H1 (cell line): ENCODE measurements at regions of chr1 and their contacts with region 1.

Region 1: GRCh38 chr1:42936309-42937078 is 22.2 kb downstream of the SLC2A1 start:
- DNase-seq: no peak
- H3K4me3 ChIP-seq: no peak overlapping the region
- H3K27ac ChIP-seq: no peak overlapping the region
- H3K4me1 ChIP-seq: peaks cover 3 to 41% (median 21%) of the 10 kb centered on the region in 4 experiments
- H3K27me3 ChIP-seq: no peaks in the 10 kb centered on the region
- CTCF ChIP-seq: no peak
- EP300 ChIP-seq: no peak
- POLR2A ChIP-seq: peak in 1 of 2 experiments; percentile 54; a peak in 1 of 3 replicates
- RAD21 ChIP-seq: no peak

Region 2: GRCh38 chr1:42891465-42892150 is 44.9 kb before region 1 on chr1:
- CTCF ChIA-PET with region 1: no interaction called
- POLR2A ChIA-PET with region 1: no interaction called
- DNase-seq: no peak
- H3K4me3 ChIP-seq: no peak overlapping the region
- H3K27ac ChIP-seq: no peak overlapping the region
- H3K4me1 ChIP-seq: no peaks in the 10 kb centered on the region; a peak in 1 of 7 replicates
- H3K27me3 ChIP-seq: no peaks in the 10 kb centered on the region
- CTCF ChIP-seq: no peak
- EP300 ChIP-seq: no peak
- POLR2A ChIP-seq: no peak
- RAD21 ChIP-seq: no peak

Region 3: GRCh38 chr1:42924082-42924850 is 12.2 kb before region 1 on chr1:
- CTCF ChIA-PET with region 1: interaction called, 11 read pairs
- POLR2A ChIA-PET with region 1: interaction called, 40 read pairs
- DNase-seq: peak; percentile 84 to 98
- H3K4me3 ChIP-seq: peak overlapping the region; percentile 54 to 74 (median 60)
- H3K27ac ChIP-seq: peak overlapping the region; percentile 81; the same call in 1 of the 2 replicates
- H3K4me1 ChIP-seq: peaks cover 4 to 10% (median 7%) of the 10 kb centered on the region in 4 experiments; a peak in 6 of 7 replicates
- H3K27me3 ChIP-seq: no peaks in the 10 kb centered on the region
- CTCF ChIP-seq: peak in 2 of 3 experiments; percentile 2 to 33; a peak in 2 of 4 replicates
- EP300 ChIP-seq: no peak
- POLR2A ChIP-seq: peak; percentile 73 to 93
- RAD21 ChIP-seq: peak in 1 of 2 experiments; percentile 7; a peak in 1 of 4 replicates

Region 4: GRCh38 chr1:42952303-42953001 is 16.0 kb after region 1 on chr1:
- CTCF ChIA-PET with region 1: interaction called, 7 read pairs
- POLR2A ChIA-PET with region 1: interaction called, 26 read pairs
- DNase-seq: no peak
- H3K4me3 ChIP-seq: no peak overlapping the region; a peak in 1 of 8 replicates
- H3K27ac ChIP-seq: peak overlapping the region; percentile 43
- H3K4me1 ChIP-seq: peaks cover 22 to 59% (median 45%) of the 10 kb centered on the region in 4 experiments
- H3K27me3 ChIP-seq: no peaks in the 10 kb centered on the region
- CTCF ChIP-seq: no peak
- EP300 ChIP-seq: no peak
- POLR2A ChIP-seq: peak in 1 of 2 experiments; percentile 37; a peak in 2 of 3 replicates
- RAD21 ChIP-seq: no peak